Prostate gland (tissue), 2 donors: ENCODE measurements at regions of chr3 and their contacts with region 1.

Region 1: GRCh38 chr3:9067352-9067975 is 104.2 kb upstream of the RAD18 start:
- DNase-seq: peak; percentile 11
- H3K4me3 ChIP-seq: no peak overlapping the region
- H3K27ac ChIP-seq: no peak overlapping the region
- H3K4me1 ChIP-seq: no peaks in the 10 kb centered on the region
- H3K27me3 ChIP-seq: no peaks in the 10 kb centered on the region
- CTCF ChIP-seq: peak; percentile 62 to 71 (median 67)
- POLR2A ChIP-seq: no peak

Region 2: GRCh38 chr3:8970971-8971589 is 96.4 kb before region 1 on chr3:
- intact Hi-C with region 1: loop called (anchors 5 kb)
- DNase-seq: peak; percentile 60
- H3K4me3 ChIP-seq: no peak overlapping the region
- H3K27ac ChIP-seq: no peak overlapping the region
- H3K4me1 ChIP-seq: peaks cover 2% of the 10 kb centered on the region
- H3K27me3 ChIP-seq: no peaks in the 10 kb centered on the region
- CTCF ChIP-seq: peak; percentile 95 to 98 (median 97)
- POLR2A ChIP-seq: no peak

Region 3: DNA sequence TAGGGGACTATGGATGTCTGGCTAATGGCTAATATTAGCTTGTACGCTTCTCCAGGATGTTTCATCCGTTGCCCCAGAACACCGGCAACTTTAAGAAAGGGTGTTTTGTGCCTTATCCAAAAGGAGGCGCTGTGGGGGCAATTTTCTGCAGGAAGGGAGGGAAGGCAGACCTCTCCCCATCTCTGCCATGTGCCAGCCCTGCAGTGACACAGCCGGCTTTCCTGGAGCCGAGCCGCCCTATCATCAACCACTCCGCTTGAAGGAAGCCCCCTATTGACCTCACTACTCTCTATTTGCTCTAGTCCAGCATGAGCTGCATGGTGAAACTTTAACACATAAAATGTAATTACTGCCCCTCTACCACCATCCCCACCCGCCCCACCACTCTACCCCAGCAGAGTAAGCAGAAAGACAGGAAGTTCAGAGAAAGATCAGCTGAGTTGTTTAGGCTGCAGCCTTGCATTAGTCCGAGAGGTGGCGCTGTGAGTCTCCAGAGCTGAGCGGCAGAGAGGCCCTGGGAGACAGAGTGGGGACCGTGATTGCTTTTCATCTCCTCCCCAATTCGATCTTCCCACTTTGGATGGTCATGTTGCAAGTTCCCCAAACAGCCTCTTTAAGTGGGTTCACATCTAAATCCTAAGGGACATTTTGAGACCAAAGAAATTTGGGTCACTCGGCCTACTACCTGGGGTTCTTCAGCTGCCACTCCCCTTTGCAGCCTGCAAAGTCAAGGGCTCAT is 79.7 kb before region 1 on chr3:
- intact Hi-C with region 1: loop called (anchors 5 kb)
- DNase-seq: peak; percentile 41
- H3K4me3 ChIP-seq: no peak overlapping the region
- H3K27ac ChIP-seq: no peak overlapping the region
- H3K4me1 ChIP-seq: no peaks in the 10 kb centered on the region
- H3K27me3 ChIP-seq: no peaks in the 10 kb centered on the region
- CTCF ChIP-seq: peak; percentile 52 to 74 (median 71)
- POLR2A ChIP-seq: no peak